CD4-positive, alpha-beta T cell (primary cell): ENCODE measurements at regions of chr15 and their contacts with region 1.

Region 1: GRCh38 chr15:64841258-64842095 is at the start of gene PLEKHO2:
- DNase-seq: peak; percentile 69 to 97 (median 90)
- ATAC-seq: peak; percentile 79
- H3K4me3 ChIP-seq: peak within 1 kb of the TSS; percentile 88
- H3K4me3 Mint-ChIP-seq: peak within 1 kb of the TSS; percentile 96
- H3K27ac ChIP-seq: peak within 1 kb of the TSS; percentile 77 to 83
- H3K27ac Mint-ChIP-seq: peak within 1 kb of the TSS; percentile 83
- H3K4me1 ChIP-seq: peaks cover 82% of the 10 kb centered on the region
- H3K4me1 Mint-ChIP-seq: peaks cover 86% of the 10 kb centered on the region
- H3K27me3 ChIP-seq: no peaks in the 10 kb centered on the region
- H3K27me3 Mint-ChIP-seq: no peaks in the 10 kb centered on the region
- CTCF ChIP-seq: peak; percentile 36
- total RNA-seq, gene PLEKHO2: 5.6 to 5.9 TPM

Region 2: DNA sequence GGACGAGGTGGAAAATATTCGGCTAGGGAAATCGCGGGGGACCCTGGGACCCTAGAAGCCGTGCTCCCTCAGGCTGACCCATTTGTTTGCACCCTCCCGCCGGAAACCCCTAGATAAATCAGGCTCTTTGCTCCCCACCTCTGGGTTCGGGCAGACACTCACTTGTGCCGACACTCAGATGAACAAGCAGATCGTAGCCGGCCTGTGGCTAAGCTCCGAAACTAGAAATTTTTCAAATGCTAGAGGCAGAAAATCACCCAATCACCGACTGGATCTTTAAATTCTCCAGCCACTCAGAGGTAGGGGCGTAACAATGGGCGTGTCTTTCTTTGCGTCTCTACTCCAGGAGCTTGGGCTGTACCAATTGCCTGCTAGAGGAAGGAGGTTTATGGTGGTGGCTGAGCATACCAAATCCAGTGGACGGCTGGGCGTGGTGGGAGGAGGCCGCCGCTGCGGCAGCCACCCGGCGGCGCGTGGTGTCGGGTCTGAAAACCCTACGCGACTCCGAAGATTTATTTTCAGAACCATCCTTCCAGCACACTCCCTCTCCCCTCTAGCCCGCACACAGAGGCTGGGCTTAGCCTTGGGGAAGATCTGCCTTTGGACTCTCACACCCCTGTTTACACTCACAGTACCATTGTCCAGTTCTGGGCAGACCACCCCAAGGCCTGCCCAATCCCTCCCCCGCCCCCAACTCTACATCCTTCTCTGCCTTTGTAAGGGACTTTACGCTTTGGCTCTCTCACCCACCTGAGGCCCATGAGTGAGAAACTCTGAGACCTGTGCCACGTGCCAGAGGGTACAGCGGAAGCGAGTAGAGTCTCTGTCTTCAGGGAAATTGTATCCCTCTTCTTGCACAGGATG is 15.8 kb before region 1 on chr15 and contains the start of gene PIF1:
- CTCF ChIA-PET with region 1: interaction called, 24 read pairs
- POLR2A ChIA-PET with region 1: interaction called, 31 read pairs
- intact Hi-C with region 1: loop called (anchors 1 to 2 kb)
- DNase-seq: peak; percentile 72 to 97 (median 81)
- ATAC-seq: peak; percentile 98
- H3K4me3 ChIP-seq: peak within 1 kb of the TSS; percentile 61
- H3K4me3 Mint-ChIP-seq: peak within 1 kb of the TSS; percentile 86
- H3K27ac ChIP-seq: peak within 1 kb of the TSS in 1 of 2 donors; percentile 9
- H3K27ac Mint-ChIP-seq: peak within 1 kb of the TSS; percentile 61
- H3K4me1 ChIP-seq: peaks cover 37% of the 10 kb centered on the region
- H3K4me1 Mint-ChIP-seq: peaks cover 31% of the 10 kb centered on the region
- H3K27me3 ChIP-seq: peaks cover 5 to 7% of the 10 kb centered on the region in 2 experiments
- H3K27me3 Mint-ChIP-seq: peaks cover 17% of the 10 kb centered on the region
- CTCF ChIP-seq: no peak
- total RNA-seq, gene PIF1: 0.22 to 0.27 TPM

Region 3: GRCh38 chr15:64905119-64905831 is 63.8 kb after region 1 on chr15:
- CTCF ChIA-PET with region 1: interaction called, 8 read pairs
- POLR2A ChIA-PET with region 1: no interaction called
- intact Hi-C with region 1: loop called in 1 of 2 experiments (anchors 2 kb)
- DNase-seq: peak; percentile 63 to 88 (median 74)
- ATAC-seq: peak; percentile 74
- H3K4me3 ChIP-seq: peak overlapping the region; percentile 24
- H3K4me3 Mint-ChIP-seq: peak overlapping the region; percentile 79
- H3K27ac ChIP-seq: no peak overlapping the region
- H3K27ac Mint-ChIP-seq: no peak overlapping the region
- H3K4me1 ChIP-seq: peaks cover 36% of the 10 kb centered on the region
- H3K4me1 Mint-ChIP-seq: peaks cover 46% of the 10 kb centered on the region
- H3K27me3 ChIP-seq: peaks cover 0 to 3% of the 10 kb centered on the region in 2 experiments
- H3K27me3 Mint-ChIP-seq: peaks cover 16% of the 10 kb centered on the region
- CTCF ChIP-seq: peak; percentile 94

Region 4: DNA sequence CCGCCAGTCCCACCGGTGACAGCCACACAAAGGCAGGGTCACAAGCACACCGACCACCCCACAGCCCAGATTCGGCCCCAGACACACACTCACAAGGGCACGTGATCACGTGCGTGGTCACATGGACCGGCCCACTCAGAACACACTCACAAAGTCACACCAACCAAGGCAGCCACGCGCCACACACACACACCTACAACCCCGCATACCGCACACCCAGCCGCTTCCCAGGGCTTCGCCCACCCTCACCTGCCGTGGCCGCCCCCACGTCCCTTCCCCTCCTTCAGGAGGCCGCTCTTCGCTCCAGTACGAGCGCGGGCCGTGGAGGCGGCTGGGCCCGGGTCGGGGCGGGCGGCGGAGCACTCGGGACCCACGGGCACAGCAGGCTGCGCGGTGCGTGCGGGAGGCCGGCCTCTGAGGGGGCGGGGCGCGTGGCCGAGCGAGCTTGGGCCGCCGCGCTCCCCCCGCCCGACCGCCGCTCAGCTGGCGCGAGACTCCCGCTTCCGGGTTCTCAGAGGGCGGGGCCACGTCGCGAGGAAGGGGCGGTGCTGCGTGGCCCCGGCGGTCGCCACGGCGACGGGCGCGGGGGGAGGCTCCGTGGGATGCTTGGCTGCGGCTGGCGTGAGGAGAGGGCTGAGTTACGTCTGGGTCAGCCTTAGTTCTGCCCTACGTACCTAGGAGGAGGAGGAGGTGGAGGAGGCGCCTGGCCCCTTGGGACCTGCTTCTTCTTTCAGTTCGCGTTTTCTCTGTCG is 148.1 kb after region 1 on chr15 and contains the start of gene SPG21:
- CTCF ChIA-PET with region 1: interaction called, 3 read pairs
- POLR2A ChIA-PET with region 1: no interaction called
- intact Hi-C with region 1: loop called in 1 of 2 experiments (anchors 5 kb)
- DNase-seq: peak; percentile 71 to 96 (median 87)
- ATAC-seq: peak; percentile 88
- H3K4me3 ChIP-seq: peak within 1 kb of the TSS; percentile 97
- H3K4me3 Mint-ChIP-seq: peak within 1 kb of the TSS; percentile 91
- H3K27ac ChIP-seq: peak within 1 kb of the TSS; percentile 63 to 66
- H3K27ac Mint-ChIP-seq: peak within 1 kb of the TSS; percentile 87
- H3K4me1 ChIP-seq: peaks cover 29% of the 10 kb centered on the region
- H3K4me1 Mint-ChIP-seq: peaks cover 53% of the 10 kb centered on the region
- H3K27me3 ChIP-seq: no peaks in the 10 kb centered on the region
- H3K27me3 Mint-ChIP-seq: no peaks in the 10 kb centered on the region
- CTCF ChIP-seq: no peak
- total RNA-seq, gene SPG21: 29.4 to 32.7 TPM

Region 5: DNA sequence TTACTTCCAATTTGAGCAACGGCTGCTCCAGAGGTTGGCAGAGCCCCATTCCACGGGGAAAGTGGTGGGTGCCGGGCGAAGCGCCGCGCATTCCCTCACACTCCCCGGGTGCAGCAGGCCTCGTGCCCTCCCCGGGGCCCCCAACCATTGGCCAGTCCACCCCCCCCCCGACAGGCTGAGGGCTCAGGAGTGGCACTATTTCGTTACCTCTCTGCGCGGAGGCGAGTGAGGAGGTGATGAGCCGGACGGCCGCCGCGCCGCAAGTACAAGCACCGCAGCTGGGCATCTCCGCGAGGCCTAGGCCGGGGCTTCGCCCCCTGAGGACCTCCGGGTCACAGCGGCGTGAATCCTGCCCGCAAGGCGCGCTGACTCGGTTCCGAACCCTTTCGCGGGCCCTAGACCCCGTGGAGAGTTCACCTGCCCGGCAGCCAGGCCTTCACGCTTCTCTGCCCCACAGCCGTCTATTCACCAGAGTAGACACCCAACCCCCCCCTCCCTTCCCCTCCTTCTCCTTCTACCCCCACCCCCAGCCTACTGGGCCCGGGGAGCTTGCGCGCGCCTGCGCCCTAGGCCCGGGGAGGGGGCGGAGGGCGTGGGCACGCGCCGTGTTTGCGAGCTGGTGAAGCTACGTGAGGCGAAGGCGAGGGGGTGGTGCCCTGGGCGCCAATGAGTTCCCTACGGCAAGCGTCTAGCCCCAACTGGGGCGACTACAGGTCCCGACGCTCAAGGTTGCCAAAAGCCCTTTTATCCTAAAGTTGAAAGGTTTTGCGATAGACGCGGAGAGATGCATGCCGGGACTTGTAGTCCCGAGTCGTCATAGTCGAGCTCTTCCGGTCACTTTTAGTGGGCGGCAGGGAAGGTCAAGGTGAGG is 343.6 kb after region 1 on chr15 and contains the start of gene CLPX:
- CTCF ChIA-PET with region 1: no interaction called
- POLR2A ChIA-PET with region 1: no interaction called
- intact Hi-C with region 1: loop called in 1 of 2 experiments (anchors 10 kb)
- DNase-seq: peak; percentile 84 to 99 (median 90)
- ATAC-seq: peak; percentile 97
- H3K4me3 ChIP-seq: peak within 1 kb of the TSS; percentile 91
- H3K4me3 Mint-ChIP-seq: peak within 1 kb of the TSS; percentile 94
- H3K27ac ChIP-seq: peak within 1 kb of the TSS; percentile 82 to 86
- H3K27ac Mint-ChIP-seq: peak within 1 kb of the TSS; percentile 85
- H3K4me1 ChIP-seq: peaks cover 29% of the 10 kb centered on the region
- H3K4me1 Mint-ChIP-seq: peaks cover 33% of the 10 kb centered on the region
- H3K27me3 ChIP-seq: no peaks in the 10 kb centered on the region
- H3K27me3 Mint-ChIP-seq: no peaks in the 10 kb centered on the region
- CTCF ChIP-seq: no peak
- total RNA-seq, gene CLPX: 29.1 to 36.3 TPM